Dendritic cell treated with granulocyte-macrophage colony-stimulating factor and Interleukin-4, amounts not matched to agents 40 ng/mL and 50 ng/mL, for 4 days (primary cell): ENCODE measurements at regions of chr18 and their contacts with region 1.

Region 1: DNA sequence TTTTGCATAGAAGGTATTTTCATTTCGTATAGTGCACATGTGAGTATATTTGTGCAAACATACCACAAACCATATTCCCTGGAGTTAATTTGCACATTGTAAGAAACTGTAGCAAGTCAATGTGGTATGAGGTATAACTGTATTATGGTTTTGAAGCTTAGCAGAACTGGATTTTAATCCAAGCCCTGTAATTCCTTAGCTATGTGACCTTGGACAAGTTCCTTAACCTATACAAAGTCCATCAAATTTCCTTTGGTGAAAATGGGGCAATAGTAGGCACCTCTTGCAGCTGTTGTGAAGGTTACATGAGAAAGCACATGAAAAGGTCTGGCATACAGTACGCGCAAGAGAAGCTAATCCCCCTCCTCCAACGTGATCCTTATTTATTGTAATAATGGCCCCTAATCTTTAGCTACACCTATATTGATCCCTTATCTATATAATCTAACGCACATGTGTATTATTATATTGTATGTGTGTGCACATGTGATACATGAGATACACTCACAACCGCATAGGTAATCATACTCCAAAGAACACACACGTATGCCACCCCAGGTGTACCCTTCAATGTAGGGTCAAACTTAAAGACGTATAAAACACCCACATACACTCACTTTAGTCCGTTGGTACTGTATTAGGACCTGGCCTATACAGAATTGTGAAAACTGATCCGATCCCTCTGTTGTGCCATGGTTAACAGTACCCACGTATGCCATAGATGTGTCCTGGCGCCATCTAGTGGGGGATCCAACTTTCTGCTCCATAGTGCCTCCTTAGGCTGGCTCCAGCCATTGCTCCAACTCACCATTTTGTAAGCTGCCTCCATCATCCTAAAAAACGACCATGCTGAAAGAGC is 402.9 kb upstream of the SLC14A2 start:
- H3K4me3 Mint-ChIP-seq: no peak overlapping the region
- H3K27ac Mint-ChIP-seq: no peak overlapping the region
- H3K4me1 Mint-ChIP-seq: no peaks in the 10 kb centered on the region
- H3K27me3 Mint-ChIP-seq: no peaks in the 10 kb centered on the region

Region 2: DNA sequence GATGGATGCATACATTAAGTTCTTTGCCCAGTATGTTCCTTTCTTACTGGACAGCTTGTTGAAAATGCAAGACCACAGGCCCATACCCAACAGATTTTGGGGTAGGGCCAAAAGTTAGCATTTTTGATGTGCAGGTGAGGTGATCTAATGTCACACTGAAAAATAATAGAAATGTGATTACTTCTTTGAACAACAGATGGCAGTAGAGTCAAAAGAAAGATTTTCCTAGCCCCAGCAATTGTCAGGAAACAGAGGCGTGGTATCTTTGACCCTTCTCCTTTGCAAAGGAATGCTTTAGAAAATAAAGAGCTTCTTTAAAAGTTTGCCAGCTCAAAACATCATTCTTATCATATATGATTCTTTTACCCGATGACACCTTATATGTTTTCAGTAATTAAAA is 1591.5 kb before region 1 on chr18:
- intact Hi-C with region 1: loop called (anchors 5 kb)
- H3K4me3 Mint-ChIP-seq: no peak overlapping the region
- H3K27ac Mint-ChIP-seq: no peak overlapping the region
- H3K4me1 Mint-ChIP-seq: no peaks in the 10 kb centered on the region
- H3K27me3 Mint-ChIP-seq: no peaks in the 10 kb centered on the region

Region 3: DNA sequence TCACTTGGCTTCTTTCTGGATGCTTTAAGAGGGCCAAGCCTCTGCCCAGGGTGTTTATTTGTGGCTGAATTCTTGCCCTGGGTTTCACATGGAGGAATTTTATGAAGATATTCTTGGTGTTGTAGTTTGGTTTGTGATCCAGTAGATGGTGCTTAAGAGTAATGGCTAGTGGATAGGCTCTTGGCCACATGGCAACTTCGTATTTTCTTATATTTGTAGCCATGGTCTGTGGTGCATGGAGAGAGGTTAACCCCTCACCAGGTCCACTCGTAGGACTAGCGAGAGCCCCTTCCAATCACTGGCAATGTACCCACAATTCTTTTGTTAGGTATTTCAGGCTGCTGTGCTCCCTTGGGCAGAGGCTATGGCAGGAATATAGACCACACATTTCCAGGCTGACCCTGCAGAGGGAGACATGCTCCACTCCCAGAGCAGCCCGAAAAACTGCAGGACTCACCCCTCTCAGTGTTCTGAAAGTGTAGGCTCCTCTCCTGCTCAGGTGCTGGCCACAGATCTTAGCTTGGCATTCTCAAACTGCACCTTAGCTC is 1113.8 kb before region 1 on chr18:
- intact Hi-C with region 1: loop called (anchors 10 kb)
- H3K4me3 Mint-ChIP-seq: no peak overlapping the region
- H3K27ac Mint-ChIP-seq: no peak overlapping the region
- H3K4me1 Mint-ChIP-seq: no peaks in the 10 kb centered on the region
- H3K27me3 Mint-ChIP-seq: no peaks in the 10 kb centered on the region

Region 4: DNA sequence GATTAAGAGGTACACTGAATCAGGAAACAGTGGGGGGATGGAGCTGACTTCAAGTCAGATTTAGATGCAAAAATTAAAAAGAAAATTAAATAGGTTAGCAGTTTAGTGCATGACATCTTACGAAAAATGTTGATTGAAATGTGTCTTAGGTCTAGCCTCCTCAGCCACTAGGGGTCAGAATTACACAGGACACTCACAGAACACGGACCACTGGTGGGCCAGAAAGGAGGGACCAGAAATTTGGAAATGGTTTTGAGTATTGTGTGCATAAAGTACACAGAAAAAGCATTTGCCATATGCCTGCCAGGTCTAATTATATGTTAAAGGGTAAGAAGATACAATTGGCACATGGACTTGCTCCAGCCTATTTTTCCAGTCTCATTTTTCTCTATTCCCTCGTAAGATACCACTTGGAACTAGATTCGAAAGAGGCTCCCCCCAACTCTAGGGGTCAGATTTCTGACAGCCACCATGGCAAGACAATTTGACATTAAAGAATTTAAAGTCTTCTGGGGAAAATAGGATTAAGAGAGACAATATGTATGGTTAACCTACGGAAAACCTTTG is 1082.0 kb before region 1 on chr18:
- intact Hi-C with region 1: loop called (anchors 10 kb)
- H3K4me3 Mint-ChIP-seq: no peak overlapping the region
- H3K27ac Mint-ChIP-seq: no peak overlapping the region
- H3K4me1 Mint-ChIP-seq: peaks cover 5% of the 10 kb centered on the region
- H3K27me3 Mint-ChIP-seq: peaks cover 1% of the 10 kb centered on the region

Region 5: GRCh38 chr18:44679056-44679905 is 533.1 kb before region 1 on chr18:
- intact Hi-C with region 1: loop called (anchors 2 kb)
- H3K4me3 Mint-ChIP-seq: peak overlapping the region; percentile 76
- H3K27ac Mint-ChIP-seq: peak overlapping the region; percentile 52
- H3K4me1 Mint-ChIP-seq: no peaks in the 10 kb centered on the region
- H3K27me3 Mint-ChIP-seq: peaks cover 23% of the 10 kb centered on the region

Region 6: DNA sequence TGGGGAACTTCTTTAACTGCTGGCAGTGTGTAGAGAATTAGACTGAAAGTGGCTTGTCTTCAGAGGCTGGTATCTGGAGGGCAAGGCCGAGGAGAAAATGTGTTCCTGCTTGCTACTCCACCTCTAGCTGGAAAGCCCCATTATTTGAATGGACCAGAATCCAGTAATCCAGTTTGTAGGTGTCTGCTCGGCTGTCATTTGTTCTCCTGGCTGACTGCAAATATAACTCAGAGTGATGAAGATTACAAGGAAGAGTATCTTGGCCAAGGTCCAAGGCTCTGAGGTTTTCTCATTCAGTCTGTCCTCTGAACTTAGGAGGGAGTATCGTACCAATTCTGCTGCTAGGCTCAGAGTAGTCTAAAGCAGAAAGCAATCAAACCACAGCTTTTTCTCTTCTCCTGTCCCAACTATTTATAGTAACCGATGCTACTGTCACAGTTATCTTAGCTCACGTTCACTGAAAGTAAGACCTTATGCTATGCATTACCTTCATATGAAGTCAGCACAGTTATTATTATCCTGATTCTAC is 303.2 kb before region 1 on chr18:
- intact Hi-C with region 1: loop called (anchors 5 kb)
- H3K4me3 Mint-ChIP-seq: no peak overlapping the region
- H3K27ac Mint-ChIP-seq: no peak overlapping the region
- H3K4me1 Mint-ChIP-seq: peaks cover 24% of the 10 kb centered on the region
- H3K27me3 Mint-ChIP-seq: peaks cover 13% of the 10 kb centered on the region